Heart left ventricle (tissue), 16 donors: ENCODE measurements at regions of chr18 and their contacts with region 1.

Region 1: DNA sequence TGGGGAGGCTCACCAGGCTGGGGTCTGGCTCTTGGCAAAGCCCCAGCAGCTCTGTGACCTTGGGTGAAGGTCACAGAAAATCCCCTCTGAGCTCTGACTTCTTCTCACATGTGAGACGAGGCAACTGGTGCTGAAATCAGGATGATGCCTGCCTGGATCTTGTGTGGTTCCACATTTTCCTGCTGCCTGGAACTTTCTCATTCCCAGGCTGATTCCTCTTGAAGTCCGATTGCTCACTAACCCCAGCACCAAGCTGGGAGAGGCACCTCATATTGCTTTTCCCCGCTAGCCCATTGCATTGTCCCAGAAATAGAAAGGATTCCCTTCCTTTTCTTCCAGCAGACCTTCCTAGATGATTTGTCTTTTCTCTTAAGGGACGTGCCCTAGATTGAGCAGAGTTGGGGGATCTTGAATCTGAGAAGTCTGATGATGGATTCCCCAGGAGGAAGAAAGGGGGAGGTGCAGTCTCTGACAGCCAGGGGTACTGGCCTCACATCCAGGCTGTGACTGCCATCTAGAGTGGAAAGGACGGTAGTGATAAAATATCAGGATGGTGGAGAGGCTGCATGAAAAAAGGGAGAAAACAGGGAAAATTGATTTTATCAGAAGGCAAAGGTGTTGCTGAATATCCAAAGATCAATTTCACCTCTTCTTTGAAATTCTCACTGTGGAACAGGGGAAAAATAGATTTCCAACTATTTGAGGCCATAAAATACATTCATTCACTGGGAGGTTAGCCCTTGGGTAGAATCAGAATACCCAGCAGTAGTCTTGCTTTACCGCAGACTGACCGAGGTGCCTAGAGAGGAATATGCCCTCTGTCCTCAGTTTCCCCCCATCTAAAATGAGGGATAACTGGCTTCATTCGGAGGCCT is 96.3 kb downstream of the FAM210A start:
- DNase-seq: peak in 4 of 5 donors; percentile 58 to 67 (median 62)
- ATAC-seq: peak; percentile 82 to 90 (median 86)
- H3K4me3 ChIP-seq: no peak overlapping the region
- H3K27ac ChIP-seq: peak overlapping the region in 8 of 12 donors; percentile 5 to 72 (median 34)
- H3K4me1 ChIP-seq: peaks cover 0 to 37% (median 11%) of the 10 kb centered on the region in 12 donors
- H3K27me3 ChIP-seq: no peaks in the 10 kb centered on the region
- CTCF ChIP-seq: peak; percentile 66 to 91 (median 86)
- POLR2A ChIP-seq: no peak

Region 2: DNA sequence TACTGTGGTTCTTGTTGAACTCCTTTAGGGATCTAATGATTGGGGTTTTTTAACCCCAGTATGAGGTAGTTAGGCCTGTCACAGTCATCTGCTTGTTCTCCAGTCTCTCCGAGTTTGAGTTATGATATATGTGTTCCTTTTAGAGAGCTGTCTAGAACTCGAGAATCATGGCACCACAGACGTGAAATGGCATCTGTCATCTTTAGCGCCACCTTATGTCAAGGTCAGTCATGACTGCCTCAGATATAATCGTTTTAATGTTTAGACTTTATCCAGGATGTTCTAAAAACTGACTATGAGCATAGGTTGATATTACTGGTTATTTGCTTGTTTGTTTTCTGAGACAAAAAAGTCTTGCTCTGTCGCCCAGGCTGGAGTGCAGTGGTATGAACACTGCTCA is 526.7 kb before region 1 on chr18:
- intact Hi-C with region 1: loop called in 1 of 10 experiments (anchors 10 kb)
- DNase-seq: no peak
- ATAC-seq: no peak
- H3K4me3 ChIP-seq: no peak overlapping the region
- H3K27ac ChIP-seq: no peak overlapping the region
- H3K4me1 ChIP-seq: peaks cover 0 to 11% (median 0%) of the 10 kb centered on the region in 12 donors
- H3K27me3 ChIP-seq: no peaks in the 10 kb centered on the region
- CTCF ChIP-seq: peak in 3 of 12 donors; percentile 12 to 23 (median 21)
- POLR2A ChIP-seq: no peak

Region 3: DNA sequence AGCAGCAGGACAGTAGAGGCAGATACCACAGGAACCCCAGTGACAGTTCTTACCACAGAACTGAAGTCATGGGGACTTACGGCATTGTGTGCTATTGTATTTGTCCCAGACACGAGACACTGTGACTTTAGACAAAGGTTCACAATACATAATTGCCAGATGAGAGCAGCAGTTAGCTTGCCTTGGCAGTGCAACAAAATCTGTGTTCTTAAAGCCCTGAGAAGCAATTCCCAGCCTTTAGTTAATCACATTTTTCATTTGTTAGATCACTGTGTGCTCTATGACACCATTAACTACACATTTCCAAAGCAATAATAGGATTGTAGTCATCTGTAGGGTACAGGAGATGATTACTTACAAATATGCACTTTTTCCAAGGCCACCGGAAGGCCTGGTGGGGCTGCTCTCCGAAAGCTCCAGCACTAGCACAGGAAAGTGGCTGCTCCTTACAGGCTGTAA is 509.1 kb before region 1 on chr18:
- intact Hi-C with region 1: loop called in 2 of 10 experiments (anchors 10 kb)
- DNase-seq: no peak
- ATAC-seq: peak; percentile 31 to 71 (median 62)
- H3K4me3 ChIP-seq: no peak overlapping the region
- H3K27ac ChIP-seq: peak overlapping the region in 6 of 12 donors; percentile 4 to 46 (median 22)
- H3K4me1 ChIP-seq: peaks cover 0 to 9% (median 0%) of the 10 kb centered on the region in 12 donors
- H3K27me3 ChIP-seq: no peaks in the 10 kb centered on the region
- CTCF ChIP-seq: no peak
- POLR2A ChIP-seq: no peak

Region 4: GRCh38 chr18:13447626-13448334 is 182.3 kb before region 1 on chr18:
- intact Hi-C with region 1: loop called in 1 of 10 experiments (anchors 10 kb)
- DNase-seq: peak in 3 of 5 donors; percentile 49 to 63 (median 58)
- ATAC-seq: peak in 3 of 4 donors; percentile 31 to 59 (median 39)
- H3K4me3 ChIP-seq: peak overlapping the region in 2 of 12 donors; percentile 0 to 22
- H3K27ac ChIP-seq: peak overlapping the region in 3 of 12 donors; percentile 12 to 51 (median 32)
- H3K4me1 ChIP-seq: peaks cover 0 to 57% (median 27%) of the 10 kb centered on the region in 12 donors
- H3K27me3 ChIP-seq: no peaks in the 10 kb centered on the region
- CTCF ChIP-seq: no peak
- POLR2A ChIP-seq: no peak

Region 5: GRCh38 chr18:13558124-13558523 is 72.0 kb before region 1 on chr18:
- intact Hi-C with region 1: loop called in 9 of 10 experiments (anchors 1 to 5 kb)
- DNase-seq: peak in 4 of 5 donors; percentile 45 to 72 (median 60)
- ATAC-seq: peak; percentile 73 to 84 (median 76)
- H3K4me3 ChIP-seq: no peak overlapping the region
- H3K27ac ChIP-seq: peak overlapping the region in 5 of 12 donors; percentile 23 to 59 (median 32)
- H3K4me1 ChIP-seq: peaks cover 3 to 68% (median 29%) of the 10 kb centered on the region in 12 donors
- H3K27me3 ChIP-seq: no peaks in the 10 kb centered on the region
- CTCF ChIP-seq: peak; percentile 48 to 75 (median 64)
- POLR2A ChIP-seq: no peak

Region 6: DNA sequence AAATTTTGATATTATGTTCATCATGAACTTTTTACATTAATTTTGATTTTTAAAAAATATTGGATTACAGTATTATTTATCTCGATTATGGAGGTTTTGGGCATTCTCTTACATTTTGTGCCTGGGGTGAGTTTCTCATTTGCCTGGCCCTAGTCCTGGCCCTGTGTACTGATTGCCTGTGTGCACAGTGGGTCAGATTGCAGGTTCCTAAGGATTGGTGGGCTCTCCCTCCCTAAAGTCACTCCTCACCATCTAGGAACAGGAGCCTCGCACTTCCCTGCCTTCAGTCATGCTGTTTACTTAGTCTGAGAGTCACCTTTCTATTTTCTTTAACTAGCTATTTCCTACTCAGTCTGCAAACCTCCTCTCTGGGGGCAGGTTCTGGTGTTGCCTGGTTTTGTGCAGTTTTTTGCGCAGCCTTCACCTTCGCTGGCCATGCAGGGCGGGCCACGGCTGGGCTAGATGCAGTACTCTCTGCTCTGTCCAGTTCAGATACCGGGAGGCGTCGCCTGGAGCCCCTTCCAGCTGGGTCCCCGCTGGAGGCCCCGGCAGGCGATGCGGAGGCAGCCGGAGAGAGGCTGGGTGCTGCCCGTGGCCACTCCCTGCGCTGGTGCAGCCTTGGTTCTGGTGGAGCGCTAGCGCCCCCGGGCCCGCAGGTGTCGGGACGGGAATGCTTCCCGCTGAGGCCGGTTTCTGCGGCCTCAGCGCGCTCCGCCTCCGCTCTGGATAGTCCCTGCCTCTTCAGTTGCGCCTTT is 170.6 kb after region 1 on chr18:
- intact Hi-C with region 1: loop called in 1 of 10 experiments (anchors 10 kb)
- DNase-seq: peak; percentile 65 to 85 (median 76)
- ATAC-seq: peak; percentile 89 to 98 (median 94)
- H3K4me3 ChIP-seq: peak overlapping the region in 10 of 12 donors; percentile 6 to 49 (median 33)
- H3K27ac ChIP-seq: no peak overlapping the region
- H3K4me1 ChIP-seq: peaks cover 0 to 15% (median 4%) of the 10 kb centered on the region in 12 donors
- H3K27me3 ChIP-seq: peaks cover 0 to 30% (median 0%) of the 10 kb centered on the region in 9 donors
- CTCF ChIP-seq: peak; percentile 26 to 66 (median 50)
- POLR2A ChIP-seq: no peak